PC-9 (cell line): ENCODE measurements at regions of chr18 and their contacts with region 1.

Region 1: GRCh38 chr18:47772374-47773248 is 157.8 kb downstream of the SMAD2 start:
- DNase-seq: peak; percentile 44 to 74
- H3K4me3 ChIP-seq: no peak overlapping the region
- H3K27ac ChIP-seq: no peak overlapping the region
- H3K4me1 ChIP-seq: no peaks in the 10 kb centered on the region
- H3K27me3 ChIP-seq: no peaks in the 10 kb centered on the region
- CTCF ChIP-seq: peak; percentile 90

Region 2: GRCh38 chr18:46849007-46849406 is 923.6 kb before region 1 on chr18:
- CTCF ChIA-PET with region 1: no interaction called
- POLR2A ChIA-PET with region 1: no interaction called
- intact Hi-C with region 1: no loop called
- DNase-seq: no peak
- H3K4me3 ChIP-seq: no peak overlapping the region
- H3K27ac ChIP-seq: no peak overlapping the region
- H3K4me1 ChIP-seq: no peaks in the 10 kb centered on the region
- H3K27me3 ChIP-seq: no peaks in the 10 kb centered on the region
- CTCF ChIP-seq: no peak

Region 3: GRCh38 chr18:48007955-48008701 is 235.5 kb after region 1 on chr18:
- CTCF ChIA-PET with region 1: no interaction called
- POLR2A ChIA-PET with region 1: no interaction called
- intact Hi-C with region 1: loop called (anchors 5 kb)
- DNase-seq: peak; percentile 55 to 65
- H3K4me3 ChIP-seq: peak overlapping the region; percentile 97
- H3K27ac ChIP-seq: no peak overlapping the region
- H3K4me1 ChIP-seq: peaks cover 29% of the 10 kb centered on the region
- H3K27me3 ChIP-seq: no peaks in the 10 kb centered on the region
- CTCF ChIP-seq: peak; percentile 53; the same call in 1 of the 2 replicates

Region 4: DNA sequence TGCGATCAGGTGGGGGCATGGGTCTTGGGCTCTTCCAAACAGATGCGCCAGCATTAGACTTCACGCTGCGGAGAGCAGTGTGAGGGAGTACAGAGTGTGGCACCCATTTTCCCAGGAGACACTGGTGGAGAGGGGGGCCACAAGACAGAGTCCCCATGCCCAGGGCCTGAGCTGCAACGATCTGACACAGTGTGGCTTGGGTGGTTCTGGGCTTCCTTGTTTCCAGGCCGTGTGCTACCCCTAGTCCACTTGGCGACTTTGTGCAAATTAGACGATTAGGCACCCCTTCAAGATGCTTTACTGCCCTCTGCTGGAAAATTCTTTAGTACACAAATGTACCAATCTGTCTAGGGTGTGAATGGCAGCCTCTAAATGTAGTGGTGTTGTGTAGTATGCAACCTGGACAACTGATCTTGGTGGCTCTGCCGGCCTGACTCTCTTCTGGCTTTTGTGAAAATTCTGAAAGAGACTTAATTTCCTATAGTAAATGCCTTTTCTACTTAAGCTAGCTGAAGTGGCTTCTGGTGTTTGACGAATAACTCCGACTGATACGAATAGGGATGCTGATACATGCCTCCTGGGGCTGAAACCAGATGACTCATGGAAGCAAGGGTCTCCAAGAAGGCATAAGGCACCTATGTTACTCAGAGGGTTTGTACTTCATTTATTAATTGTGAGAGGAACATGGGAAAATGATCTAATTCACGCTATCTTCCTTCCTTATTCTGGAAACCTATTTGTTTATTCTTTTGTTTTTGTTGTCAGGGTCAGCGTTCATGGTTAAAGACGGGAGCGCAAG is 250.1 kb after region 1 on chr18:
- CTCF ChIA-PET with region 1: no interaction called
- POLR2A ChIA-PET with region 1: no interaction called
- intact Hi-C with region 1: loop called (anchors 1 kb)
- DNase-seq: peak in 1 of 2 experiments; percentile 71
- H3K4me3 ChIP-seq: no peak overlapping the region
- H3K27ac ChIP-seq: no peak overlapping the region
- H3K4me1 ChIP-seq: peaks cover 21% of the 10 kb centered on the region
- H3K27me3 ChIP-seq: peaks cover 10% of the 10 kb centered on the region; the same call in 1 of the 2 replicates
- CTCF ChIP-seq: peak; percentile 76

Region 5: DNA sequence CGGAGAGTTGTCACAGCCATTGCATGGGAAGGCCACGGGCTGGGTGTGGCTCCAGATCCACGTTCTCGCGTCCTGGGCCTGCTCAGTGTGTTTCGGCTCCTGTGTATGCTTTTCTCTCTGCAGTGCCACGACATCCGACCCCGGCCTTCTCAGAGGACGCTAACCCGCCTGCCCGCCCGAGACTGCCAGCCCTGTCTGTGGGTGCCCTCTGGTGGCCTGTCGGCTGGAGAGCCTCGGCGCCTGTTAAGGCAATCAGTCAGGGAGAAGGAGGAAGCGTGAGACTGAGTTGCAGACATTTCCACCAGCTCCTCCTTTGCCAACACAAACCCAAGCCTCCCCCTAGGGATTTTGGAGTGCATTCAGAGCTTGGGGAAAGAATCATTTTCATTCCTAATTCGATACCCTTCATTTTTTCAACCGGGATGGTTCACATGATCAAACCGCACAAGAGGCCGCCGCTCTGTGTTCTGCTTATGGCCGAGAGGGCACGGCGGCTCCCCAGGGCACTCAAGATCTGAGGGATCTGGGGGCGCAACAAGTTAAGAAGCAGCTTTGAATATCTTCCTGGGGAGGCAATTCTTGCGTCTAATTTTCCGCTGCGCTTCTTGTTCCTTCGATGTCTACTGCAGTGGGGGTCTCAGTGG is 674.1 kb after region 1 on chr18:
- CTCF ChIA-PET with region 1: no interaction called
- POLR2A ChIA-PET with region 1: no interaction called
- intact Hi-C with region 1: loop called (anchors 1 kb)
- DNase-seq: peak; percentile 69 to 70
- H3K4me3 ChIP-seq: no peak overlapping the region
- H3K27ac ChIP-seq: no peak overlapping the region
- H3K4me1 ChIP-seq: peaks cover 17% of the 10 kb centered on the region
- H3K27me3 ChIP-seq: no peaks in the 10 kb centered on the region
- CTCF ChIP-seq: peak; percentile 91